CD4-positive, alpha-beta T cell (primary cell): ENCODE measurements at regions of chr6 and their contacts with region 1.

Region 1: DNA sequence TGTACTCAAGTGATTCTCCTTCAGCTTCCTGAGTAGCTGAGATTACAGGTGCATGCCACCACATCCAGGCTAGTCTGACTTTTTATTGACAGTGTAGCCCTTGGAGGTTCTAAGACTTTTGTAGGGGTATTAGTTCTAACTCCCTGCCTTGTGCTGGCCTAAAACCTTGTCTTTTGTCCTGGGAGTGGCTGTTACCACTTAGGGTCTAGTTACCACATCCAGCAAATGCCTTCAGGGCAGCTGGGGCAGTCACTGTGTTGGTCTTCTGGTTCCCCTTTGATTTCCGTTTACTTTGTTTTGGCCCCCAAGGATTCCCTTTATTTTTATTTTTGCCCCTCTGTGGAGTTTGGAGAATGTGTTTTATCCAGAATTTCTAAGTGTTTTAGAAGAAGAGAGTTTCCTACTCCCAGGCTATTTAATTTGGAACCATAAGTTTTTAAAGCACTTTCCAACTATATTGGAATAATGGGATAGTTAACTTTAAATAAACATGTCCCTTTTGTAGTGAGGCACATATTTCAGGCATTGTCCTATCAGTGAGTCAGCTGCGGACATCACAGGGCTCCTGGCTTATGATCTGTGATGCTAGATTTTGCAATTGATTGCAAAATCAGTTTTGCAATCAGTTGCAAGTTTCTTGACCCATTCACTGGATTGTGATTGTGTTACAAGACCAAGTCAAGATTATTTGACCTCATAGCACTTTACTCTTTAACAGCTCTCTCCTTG is 25.0 kb downstream of the IL22RA2 start:
- DNase-seq: peak in 2 of 14 experiments; percentile 55 to 65
- ATAC-seq: no peak
- H3K4me3 ChIP-seq: no peak overlapping the region
- H3K4me3 Mint-ChIP-seq: no peak overlapping the region
- H3K27ac ChIP-seq: no peak overlapping the region
- H3K27ac Mint-ChIP-seq: no peak overlapping the region
- H3K4me1 ChIP-seq: no peaks in the 10 kb centered on the region
- H3K4me1 Mint-ChIP-seq: no peaks in the 10 kb centered on the region
- H3K27me3 ChIP-seq: no peaks in the 10 kb centered on the region
- H3K27me3 Mint-ChIP-seq: no peaks in the 10 kb centered on the region
- CTCF ChIP-seq: no peak

Region 2: GRCh38 chr6:137112067-137112355 is 36.5 kb before region 1 on chr6:
- CTCF ChIA-PET with region 1: no interaction called
- POLR2A ChIA-PET with region 1: no interaction called
- intact Hi-C with region 1: no loop called
- DNase-seq: no peak
- ATAC-seq: no peak
- H3K4me3 ChIP-seq: no peak overlapping the region
- H3K4me3 Mint-ChIP-seq: no peak overlapping the region
- H3K27ac ChIP-seq: no peak overlapping the region
- H3K27ac Mint-ChIP-seq: no peak overlapping the region
- H3K4me1 ChIP-seq: no peaks in the 10 kb centered on the region
- H3K4me1 Mint-ChIP-seq: no peaks in the 10 kb centered on the region
- H3K27me3 ChIP-seq: no peaks in the 10 kb centered on the region
- H3K27me3 Mint-ChIP-seq: peaks cover 4% of the 10 kb centered on the region
- CTCF ChIP-seq: no peak

Region 3: DNA sequence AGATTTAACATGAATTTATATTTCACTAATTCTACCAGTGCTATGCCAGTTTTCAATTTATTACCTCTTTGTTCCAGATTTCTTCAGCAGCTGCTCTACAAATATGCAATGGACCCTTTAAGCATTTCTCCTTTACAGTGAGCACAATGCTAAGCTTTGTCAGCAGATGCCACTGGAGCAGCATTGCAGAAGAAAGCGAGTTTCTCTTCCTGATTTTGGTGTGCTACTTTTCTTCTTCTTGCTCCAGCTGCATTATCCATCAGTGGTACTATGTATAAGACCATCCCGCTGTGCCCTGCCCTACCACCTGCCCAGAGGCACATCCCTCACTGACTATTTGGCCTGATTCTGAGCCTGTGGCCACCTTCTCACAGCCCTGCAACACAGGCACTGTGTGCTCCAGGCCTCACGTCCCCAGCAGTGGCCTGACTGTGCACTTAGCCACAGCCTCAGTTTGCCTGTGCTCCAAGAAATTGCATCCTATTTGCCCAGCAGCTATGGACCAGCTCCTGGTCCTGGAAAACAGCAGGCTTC is 802.7 kb after region 1 on chr6:
- CTCF ChIA-PET with region 1: no interaction called
- POLR2A ChIA-PET with region 1: no interaction called
- intact Hi-C with region 1: loop called in 1 of 2 experiments (anchors 5 kb)
- DNase-seq: peak in 1 of 14 experiments; percentile 17
- ATAC-seq: no peak
- H3K4me3 ChIP-seq: no peak overlapping the region
- H3K4me3 Mint-ChIP-seq: no peak overlapping the region
- H3K27ac ChIP-seq: no peak overlapping the region
- H3K27ac Mint-ChIP-seq: no peak overlapping the region
- H3K4me1 ChIP-seq: peaks cover 11% of the 10 kb centered on the region
- H3K4me1 Mint-ChIP-seq: peaks cover 19% of the 10 kb centered on the region
- H3K27me3 ChIP-seq: no peaks in the 10 kb centered on the region
- H3K27me3 Mint-ChIP-seq: no peaks in the 10 kb centered on the region
- CTCF ChIP-seq: no peak